Naive thymus-derived CD8-positive, alpha-beta T cell (primary cell): ENCODE measurements at regions of chr17 and their contacts with region 1.

Region 1: DNA sequence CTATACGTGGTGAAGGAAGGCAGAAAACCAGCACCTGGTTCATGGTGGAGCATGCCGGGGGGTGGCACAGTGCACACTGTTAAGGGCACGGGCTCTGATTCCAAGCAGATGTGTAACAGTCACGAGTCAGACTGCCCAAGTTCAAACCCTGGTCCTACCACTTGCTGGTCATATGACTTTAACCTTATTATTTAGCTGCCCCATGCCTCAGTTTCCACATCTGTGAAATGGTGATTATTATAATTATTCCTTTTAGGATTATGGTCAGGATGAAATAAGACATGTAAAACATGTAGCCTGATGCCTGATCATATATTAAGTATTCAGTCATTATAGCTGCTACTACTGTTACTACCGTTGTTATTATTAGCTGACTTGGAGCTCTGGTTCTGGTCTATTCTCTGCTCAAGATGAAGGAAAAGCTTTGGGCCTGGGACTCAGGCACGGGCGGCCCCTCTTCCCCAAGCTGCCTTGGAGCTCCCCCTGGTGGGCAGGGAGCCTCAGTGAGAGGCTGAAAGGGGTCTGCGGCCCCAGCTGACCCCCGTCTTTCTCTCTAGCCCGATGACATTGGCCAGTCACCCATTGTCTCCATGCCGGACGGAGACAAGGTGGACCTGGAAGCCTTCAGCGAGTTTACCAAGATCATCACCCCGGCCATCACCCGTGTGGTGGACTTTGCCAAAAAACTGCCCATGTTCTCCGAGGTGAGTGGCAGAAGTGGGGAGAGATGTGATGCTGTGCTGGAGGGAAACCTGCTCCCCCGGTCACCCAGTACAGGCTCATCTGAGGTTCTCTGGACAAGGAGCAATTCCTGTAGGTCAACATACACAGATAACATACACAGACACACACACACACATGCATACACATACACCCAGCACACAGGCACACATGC is 14.0 kb downstream of the NR1D1 start:
- DNase-seq: peak; percentile 44 to 82 (median 64)
- ATAC-seq: peak; percentile 70 to 86
- H3K4me3 Mint-ChIP-seq: peak overlapping the region in 1 of 10 donors; percentile 10
- H3K27ac Mint-ChIP-seq: peak overlapping the region in 6 of 10 donors; percentile 13 to 89 (median 46)
- H3K4me1 Mint-ChIP-seq: peaks cover 9 to 34% (median 19%) of the 10 kb centered on the region in 4 donors
- H3K27me3 Mint-ChIP-seq: no peaks in the 10 kb centered on the region

Region 2: GRCh38 chr17:40075201-40075941 is 11.0 kb before region 1 on chr17:
- POLR2A ChIA-PET with region 1: interaction called, 13 read pairs
- DNase-seq: peak; percentile 45 to 83 (median 69)
- ATAC-seq: peak; percentile 73 to 85
- H3K4me3 Mint-ChIP-seq: peak overlapping the region; percentile 7 to 75 (median 62)
- H3K27ac Mint-ChIP-seq: peak overlapping the region; percentile 41 to 96 (median 80)
- H3K4me1 Mint-ChIP-seq: peaks cover 33 to 67% (median 62%) of the 10 kb centered on the region in 4 donors
- H3K27me3 Mint-ChIP-seq: no peaks in the 10 kb centered on the region